Mammary epithelial cell (primary cell): ENCODE measurements at regions of chr6 and their contacts with region 1.

Region 1: GRCh38 chr6:149729824-149730223 is 11.9 kb upstream of the LATS1 start:
- DNase-seq: no peak
- H3K4me3 ChIP-seq: no peak overlapping the region
- H3K27ac ChIP-seq: no peak overlapping the region
- H3K4me1 ChIP-seq: no peaks in the 10 kb centered on the region
- H3K27me3 ChIP-seq: no peaks in the 10 kb centered on the region
- CTCF ChIP-seq: no peak

Region 2: DNA sequence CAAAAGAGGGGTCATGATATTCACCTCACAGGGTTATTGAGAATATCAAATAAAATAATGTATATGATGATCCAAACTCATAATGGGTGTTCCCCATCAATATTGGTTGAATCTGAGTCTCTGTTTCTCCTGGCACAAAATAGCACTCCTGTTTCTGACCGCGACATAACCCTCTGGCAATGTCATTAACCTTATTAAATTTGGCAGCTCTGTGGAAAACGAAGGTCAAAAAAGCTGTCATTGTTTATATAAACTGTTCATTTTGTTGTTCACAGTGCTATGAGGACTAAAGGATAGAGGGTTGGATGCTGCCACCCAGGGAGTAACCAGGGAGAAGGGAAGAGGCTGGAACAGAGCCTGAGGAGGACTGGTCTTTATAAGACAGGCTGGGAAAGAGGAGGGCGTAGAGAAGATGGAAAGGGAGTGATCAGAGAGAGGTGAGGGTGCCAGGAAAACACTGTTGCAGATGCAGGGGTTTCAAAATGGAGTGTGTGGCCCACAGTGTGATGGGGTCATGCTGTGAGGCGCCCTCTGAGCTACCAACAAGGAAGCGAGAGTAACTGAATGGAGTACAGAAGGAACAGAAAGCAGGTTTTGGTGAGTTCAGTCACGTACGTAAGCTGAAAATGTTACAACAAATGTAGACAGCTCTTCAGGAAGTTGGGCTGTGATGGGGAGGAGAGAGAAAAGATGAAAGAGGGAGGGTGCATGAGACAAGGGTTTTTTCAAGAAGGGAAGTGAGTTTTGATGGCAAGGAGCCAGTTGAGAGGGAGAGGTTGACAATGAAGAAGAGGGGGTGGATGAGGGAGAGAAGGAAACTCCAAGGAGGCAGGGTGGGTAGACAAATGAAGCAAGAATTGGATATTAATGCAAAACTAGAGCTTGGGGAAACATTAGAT is 663.9 kb before region 1 on chr6:
- CTCF ChIA-PET with region 1: no interaction called
- dilution Hi-C with region 1: no loop called
- in situ Hi-C with region 1: no loop called
- intact Hi-C with region 1: no loop called
- DNase-seq: no peak
- H3K4me3 ChIP-seq: no peak overlapping the region
- H3K27ac ChIP-seq: no peak overlapping the region
- H3K4me1 ChIP-seq: no peaks in the 10 kb centered on the region
- H3K27me3 ChIP-seq: no peaks in the 10 kb centered on the region
- CTCF ChIP-seq: no peak

Region 3: DNA sequence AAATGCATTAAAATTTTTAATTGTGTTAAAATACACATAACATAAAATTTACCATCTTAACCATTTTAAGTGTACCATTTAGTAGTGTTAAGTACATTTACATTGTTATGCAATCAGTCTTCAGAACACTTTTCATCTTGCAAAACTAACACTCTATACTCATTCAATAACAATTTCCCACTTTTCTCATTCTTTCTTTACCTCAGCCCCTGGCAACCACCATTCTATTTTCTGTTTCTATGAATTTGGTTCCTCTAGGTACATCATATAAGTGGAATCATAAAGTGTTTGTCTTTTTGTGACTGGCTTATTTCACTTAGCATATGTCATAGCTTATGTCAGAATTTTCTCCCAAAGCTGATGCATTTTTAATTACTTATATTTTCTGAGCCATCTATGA is 51.9 kb after region 1 on chr6:
- CTCF ChIA-PET with region 1: no interaction called
- dilution Hi-C with region 1: loop called (anchors 5 kb)
- in situ Hi-C with region 1: no loop called
- intact Hi-C with region 1: no loop called
- DNase-seq: no peak
- H3K4me3 ChIP-seq: no peak overlapping the region
- H3K27ac ChIP-seq: no peak overlapping the region
- H3K4me1 ChIP-seq: no peaks in the 10 kb centered on the region
- H3K27me3 ChIP-seq: no peaks in the 10 kb centered on the region
- CTCF ChIP-seq: no peak

Region 4: GRCh38 chr6:150129616-150130422 is 400.0 kb after region 1 on chr6:
- CTCF ChIA-PET with region 1: no interaction called
- dilution Hi-C with region 1: no loop called
- in situ Hi-C with region 1: no loop called
- intact Hi-C with region 1: no loop called
- DNase-seq: no peak
- H3K4me3 ChIP-seq: no peak overlapping the region
- H3K27ac ChIP-seq: no peak overlapping the region
- H3K4me1 ChIP-seq: no peaks in the 10 kb centered on the region
- H3K27me3 ChIP-seq: no peaks in the 10 kb centered on the region
- CTCF ChIP-seq: no peak